ENCODE measurements at regions of chr2 and their contacts with region 1.

Region 1: GRCh38 chr2:120343433-120344105 is 2.4 kb upstream of the INHBB start:
- DNase-seq: peak; percentile 87 to 94 (median 94)
- ATAC-seq: peak; percentile 87 to 89
- H3K4me3 ChIP-seq: peak overlapping the region; percentile 71
- H3K27ac ChIP-seq: no peak overlapping the region
- H3K4me1 ChIP-seq: peaks cover 1% of the 10 kb centered on the region
- H3K27me3 ChIP-seq: no peaks in the 10 kb centered on the region

Region 2: GRCh38 chr2:120223034-120223912 is 120.3 kb before region 1 on chr2 and contains the start of gene TMEM185B:
- intact Hi-C with region 1: no loop called
- DNase-seq: peak; percentile 90 to 97 (median 95)
- ATAC-seq: peak; percentile 97 to 98
- H3K4me3 ChIP-seq: peak within 1 kb of the TSS; percentile 77
- H3K27ac ChIP-seq: peak within 1 kb of the TSS; percentile 85
- H3K4me1 ChIP-seq: no peaks in the 10 kb centered on the region
- H3K27me3 ChIP-seq: no peaks in the 10 kb centered on the region
- total RNA-seq, gene TMEM185B: 19.7 to 27.5 (median 21.7) TPM

Region 3: GRCh38 chr2:120520929-120521912 is 177.7 kb after region 1 on chr2:
- intact Hi-C with region 1: loop called in 2 of 4 experiments (anchors 10 kb)
- DNase-seq: no peak
- ATAC-seq: peak in 1 of 2 donors; percentile 18
- H3K4me3 ChIP-seq: no peak overlapping the region
- H3K27ac ChIP-seq: no peak overlapping the region
- H3K4me1 ChIP-seq: peaks cover 4% of the 10 kb centered on the region
- H3K27me3 ChIP-seq: no peaks in the 10 kb centered on the region

Region 4: DNA sequence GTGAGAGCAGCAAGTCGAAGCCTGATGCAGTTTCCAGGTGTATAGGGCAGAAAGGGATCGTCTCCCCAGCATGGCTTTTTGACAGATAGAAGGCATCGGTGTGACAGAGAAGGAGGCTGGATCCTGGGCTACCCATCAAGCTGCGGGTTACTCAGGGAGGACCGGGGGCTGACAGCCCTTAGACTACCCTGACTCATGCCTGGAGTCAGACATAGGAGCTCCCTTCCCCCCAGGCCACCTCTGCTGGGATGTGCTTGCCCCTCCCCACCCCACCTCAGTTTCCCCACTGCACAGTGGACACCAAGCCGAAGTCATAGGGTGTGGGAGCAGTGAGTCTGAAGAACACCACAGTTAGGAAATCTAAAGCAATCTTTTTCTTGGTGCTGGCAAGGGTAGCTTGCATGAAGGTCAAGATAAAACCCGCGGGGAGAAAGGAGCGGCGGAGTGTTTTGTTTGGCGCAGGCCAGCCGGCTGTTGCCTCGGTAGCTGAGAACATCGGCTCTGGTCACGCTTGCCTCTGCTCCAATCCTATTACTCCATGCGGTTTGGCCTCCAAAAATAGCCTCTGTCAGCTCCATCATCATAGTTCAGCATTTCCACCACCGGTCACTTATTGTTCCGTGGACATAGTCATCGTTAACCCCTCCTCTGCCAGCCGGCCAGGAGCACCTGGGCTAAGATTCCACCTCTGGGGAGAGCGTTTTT is 222.9 kb after region 1 on chr2:
- intact Hi-C with region 1: loop called in 1 of 4 experiments (anchors 10 kb)
- DNase-seq: peak; percentile 91 to 94 (median 94)
- ATAC-seq: peak; percentile 94
- H3K4me3 ChIP-seq: no peak overlapping the region
- H3K27ac ChIP-seq: peak overlapping the region; percentile 84
- H3K4me1 ChIP-seq: peaks cover 18% of the 10 kb centered on the region
- H3K27me3 ChIP-seq: no peaks in the 10 kb centered on the region

Region 5: DNA sequence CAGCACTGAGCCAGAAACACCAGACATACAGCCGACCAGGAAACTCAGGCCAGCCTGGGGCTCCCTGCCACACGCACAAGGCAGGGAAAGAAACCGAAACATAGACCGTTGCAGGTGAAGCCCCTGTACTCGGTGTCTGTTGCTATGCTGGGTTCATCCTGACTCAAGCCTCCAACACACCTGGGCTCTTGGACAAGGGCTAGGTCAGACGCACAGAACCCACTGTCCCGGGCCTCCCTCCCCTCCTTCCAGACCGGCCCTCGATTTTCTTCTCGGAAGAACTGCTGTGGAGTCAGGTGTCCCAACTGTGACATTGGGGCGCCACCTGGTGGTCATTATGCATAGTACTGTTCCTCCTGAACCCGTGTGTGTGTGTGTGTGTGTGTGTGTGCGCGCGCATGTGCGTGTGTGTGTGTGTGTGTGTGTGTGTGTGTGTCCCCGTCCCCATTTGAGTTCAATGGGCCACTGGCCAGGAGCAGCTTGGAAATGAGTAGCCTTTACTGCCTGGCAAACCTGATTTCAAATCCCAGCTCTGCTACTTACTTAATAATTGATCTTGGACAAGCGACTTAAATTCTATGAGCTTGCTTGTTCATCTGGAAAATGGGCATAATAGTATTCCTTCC is 336.7 kb after region 1 on chr2:
- intact Hi-C with region 1: loop called (anchors 2 to 5 kb)
- DNase-seq: peak; percentile 83 to 89 (median 87)
- ATAC-seq: peak; percentile 77 to 81
- H3K4me3 ChIP-seq: no peak overlapping the region
- H3K27ac ChIP-seq: no peak overlapping the region
- H3K4me1 ChIP-seq: no peaks in the 10 kb centered on the region
- H3K27me3 ChIP-seq: no peaks in the 10 kb centered on the region

Region 6: GRCh38 chr2:120779781-120780283 is 436.3 kb after region 1 on chr2:
- intact Hi-C with region 1: no loop called
- DNase-seq: peak in 2 of 3 donors; percentile 14 to 33
- ATAC-seq: no peak
- H3K4me3 ChIP-seq: no peak overlapping the region
- H3K27ac ChIP-seq: no peak overlapping the region
- H3K4me1 ChIP-seq: peaks cover 8% of the 10 kb centered on the region
- H3K27me3 ChIP-seq: no peaks in the 10 kb centered on the region